ENCODE measurements at regions of chr11 and their contacts with region 1.

Region 1: DNA sequence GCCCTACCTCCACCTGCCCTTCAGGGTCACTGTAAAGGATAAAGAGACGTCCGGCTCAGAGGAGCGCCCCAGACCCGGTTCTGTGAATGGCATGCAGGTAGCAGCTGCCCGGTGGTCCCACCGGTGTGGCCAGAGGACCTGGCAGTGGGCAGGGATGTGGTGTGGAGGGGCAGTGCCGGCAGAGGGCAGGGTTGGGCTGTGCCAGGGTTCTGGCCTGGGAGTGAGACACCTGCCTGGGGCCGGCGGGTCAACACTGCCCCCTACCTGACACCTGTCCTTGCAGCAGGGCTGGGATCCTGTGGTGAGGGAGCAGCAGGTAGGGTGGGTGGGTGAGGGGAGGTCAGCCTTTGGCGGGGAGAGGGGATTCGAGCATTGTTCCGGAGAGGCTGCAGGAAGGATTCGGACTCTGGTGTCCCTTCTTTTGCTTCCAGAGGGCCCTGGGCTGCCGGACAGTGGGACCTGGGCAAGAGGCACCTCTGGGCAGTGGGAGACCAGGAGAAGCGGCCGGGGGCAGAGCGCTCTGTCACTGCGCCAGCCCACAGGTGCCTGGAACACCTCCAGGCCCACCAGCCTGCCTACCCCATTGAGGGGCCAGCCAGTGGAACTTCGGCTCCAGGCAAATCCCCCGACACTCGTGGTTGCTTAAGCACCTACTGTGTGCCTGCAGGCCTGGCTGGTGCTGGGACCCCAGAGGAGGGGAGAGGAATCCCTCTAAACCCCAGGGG is 1.6 kb upstream of the PHLDA2 start:
- DNase-seq: peak; percentile 99
- H3K4me3 Mint-ChIP-seq: peak overlapping the region; percentile 94
- H3K27ac Mint-ChIP-seq: peak overlapping the region; percentile 98
- H3K4me1 Mint-ChIP-seq: peaks cover 21% of the 10 kb centered on the region
- H3K27me3 Mint-ChIP-seq: no peaks in the 10 kb centered on the region
- CTCF ChIP-seq: peak; percentile 93

Region 2: DNA sequence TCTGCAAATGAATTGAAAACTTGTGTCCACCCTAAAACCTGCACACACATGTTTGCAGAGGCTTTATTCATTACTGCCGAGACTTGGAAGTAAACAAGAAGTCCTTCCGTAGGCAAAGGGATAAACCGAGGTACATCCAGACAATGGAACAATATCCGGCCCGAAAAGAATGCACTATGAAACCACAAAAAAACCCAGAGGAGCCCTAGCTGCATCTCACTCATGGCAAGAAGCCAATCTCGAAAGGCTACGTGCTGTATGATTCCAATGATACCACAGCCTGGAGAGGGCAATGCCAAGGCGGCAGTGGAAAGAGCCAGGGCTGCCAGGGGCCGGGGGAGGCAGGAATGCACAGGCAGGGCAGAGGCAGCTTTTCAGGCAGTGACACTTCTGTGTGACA is 986.9 kb before region 1 on chr11:
- CTCF ChIA-PET with region 1: no interaction called
- intact Hi-C with region 1: no loop called
- DNase-seq: no peak
- H3K4me3 Mint-ChIP-seq: no peak overlapping the region
- H3K27ac Mint-ChIP-seq: no peak overlapping the region
- H3K4me1 Mint-ChIP-seq: peaks cover 9% of the 10 kb centered on the region
- H3K27me3 Mint-ChIP-seq: peaks cover 17% of the 10 kb centered on the region
- CTCF ChIP-seq: no peak

Region 3: GRCh38 chr11:2532704-2533586 is 397.9 kb before region 1 on chr11:
- CTCF ChIA-PET with region 1: interaction called, 16 read pairs
- intact Hi-C with region 1: loop called (anchors 2 kb)
- DNase-seq: peak; percentile 96
- H3K4me3 Mint-ChIP-seq: peak overlapping the region; percentile 39
- H3K27ac Mint-ChIP-seq: peak overlapping the region; percentile 26
- H3K4me1 Mint-ChIP-seq: peaks cover 15% of the 10 kb centered on the region
- H3K27me3 Mint-ChIP-seq: no peaks in the 10 kb centered on the region
- CTCF ChIP-seq: peak; percentile 98

Region 4: DNA sequence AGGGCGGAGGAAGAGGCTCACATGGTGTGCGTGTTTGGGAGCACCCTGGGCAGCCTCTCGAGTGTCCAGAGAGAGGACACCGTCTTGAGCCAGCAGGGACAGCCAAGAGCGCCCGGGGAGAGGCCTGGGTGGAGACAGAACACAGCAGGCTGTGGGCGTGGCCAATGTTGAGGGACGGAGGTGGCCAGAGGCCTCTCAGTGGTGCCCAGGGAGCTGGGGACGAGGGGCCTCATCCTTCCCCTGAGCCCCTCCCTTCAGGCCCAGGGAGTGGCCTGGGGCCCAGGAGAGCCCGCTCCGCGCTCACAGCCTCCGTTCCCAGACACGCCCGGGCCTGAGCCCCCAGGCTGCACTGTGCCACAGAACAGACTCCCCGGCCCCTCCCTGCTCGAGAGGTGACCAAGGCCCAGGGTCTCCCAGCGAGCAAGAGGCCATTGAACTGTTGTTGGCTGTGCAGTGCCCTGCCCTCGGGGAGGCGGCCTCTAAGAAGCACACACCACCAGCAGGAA is 93.7 kb before region 1 on chr11:
- CTCF ChIA-PET with region 1: no interaction called
- intact Hi-C with region 1: no loop called
- DNase-seq: peak; percentile 76
- H3K4me3 Mint-ChIP-seq: no peak overlapping the region
- H3K27ac Mint-ChIP-seq: no peak overlapping the region
- H3K4me1 Mint-ChIP-seq: no peaks in the 10 kb centered on the region
- H3K27me3 Mint-ChIP-seq: peaks cover 67% of the 10 kb centered on the region
- CTCF ChIP-seq: peak; percentile 22

Region 5: DNA sequence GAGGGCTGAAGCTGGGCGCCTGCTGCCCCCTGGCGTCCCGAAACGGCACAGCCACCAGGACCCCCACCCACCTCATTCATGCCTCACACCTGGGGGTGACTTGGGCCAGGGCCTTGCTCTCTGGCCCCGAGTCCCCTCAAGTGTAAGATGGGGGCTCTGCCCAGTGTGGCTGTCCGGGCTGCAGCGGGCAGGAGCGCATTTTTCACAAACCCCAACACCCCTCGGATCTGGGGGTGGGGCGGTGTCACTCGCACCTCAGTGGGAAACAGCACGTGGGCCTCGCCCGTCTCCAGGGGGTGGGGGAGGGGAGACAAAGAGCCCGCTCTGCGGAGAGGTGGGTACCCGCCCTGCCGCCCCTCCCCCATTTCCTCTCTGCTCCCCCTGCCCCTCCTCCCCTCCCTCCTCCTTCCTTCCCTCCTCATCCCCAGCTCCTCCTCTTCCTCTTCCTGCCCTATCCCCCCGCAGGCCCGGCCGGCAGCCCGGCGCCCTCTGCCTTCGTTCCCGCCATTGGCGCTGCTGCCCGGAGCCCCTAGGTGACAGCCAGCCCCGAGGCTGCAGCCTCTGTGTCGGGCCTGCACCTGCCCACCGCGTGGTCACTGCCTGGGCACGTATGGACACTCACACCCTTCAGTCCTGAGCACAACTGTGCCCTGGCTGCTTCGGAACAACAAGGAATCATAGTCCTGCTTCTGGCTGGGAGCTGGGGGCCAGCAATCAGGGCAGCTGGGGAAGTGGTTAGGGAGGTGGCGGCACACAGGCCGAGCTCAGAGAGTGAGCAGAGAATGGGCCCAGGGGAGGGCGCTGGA is 38.4 kb before region 1 on chr11:
- CTCF ChIA-PET with region 1: interaction called, 40 read pairs
- intact Hi-C with region 1: loop called (anchors 2 kb)
- DNase-seq: peak; percentile 73
- H3K4me3 Mint-ChIP-seq: peak overlapping the region; percentile 72
- H3K27ac Mint-ChIP-seq: peak overlapping the region; percentile 84
- H3K4me1 Mint-ChIP-seq: peaks cover 15% of the 10 kb centered on the region
- H3K27me3 Mint-ChIP-seq: no peaks in the 10 kb centered on the region
- CTCF ChIP-seq: peak; percentile 86

Region 6: DNA sequence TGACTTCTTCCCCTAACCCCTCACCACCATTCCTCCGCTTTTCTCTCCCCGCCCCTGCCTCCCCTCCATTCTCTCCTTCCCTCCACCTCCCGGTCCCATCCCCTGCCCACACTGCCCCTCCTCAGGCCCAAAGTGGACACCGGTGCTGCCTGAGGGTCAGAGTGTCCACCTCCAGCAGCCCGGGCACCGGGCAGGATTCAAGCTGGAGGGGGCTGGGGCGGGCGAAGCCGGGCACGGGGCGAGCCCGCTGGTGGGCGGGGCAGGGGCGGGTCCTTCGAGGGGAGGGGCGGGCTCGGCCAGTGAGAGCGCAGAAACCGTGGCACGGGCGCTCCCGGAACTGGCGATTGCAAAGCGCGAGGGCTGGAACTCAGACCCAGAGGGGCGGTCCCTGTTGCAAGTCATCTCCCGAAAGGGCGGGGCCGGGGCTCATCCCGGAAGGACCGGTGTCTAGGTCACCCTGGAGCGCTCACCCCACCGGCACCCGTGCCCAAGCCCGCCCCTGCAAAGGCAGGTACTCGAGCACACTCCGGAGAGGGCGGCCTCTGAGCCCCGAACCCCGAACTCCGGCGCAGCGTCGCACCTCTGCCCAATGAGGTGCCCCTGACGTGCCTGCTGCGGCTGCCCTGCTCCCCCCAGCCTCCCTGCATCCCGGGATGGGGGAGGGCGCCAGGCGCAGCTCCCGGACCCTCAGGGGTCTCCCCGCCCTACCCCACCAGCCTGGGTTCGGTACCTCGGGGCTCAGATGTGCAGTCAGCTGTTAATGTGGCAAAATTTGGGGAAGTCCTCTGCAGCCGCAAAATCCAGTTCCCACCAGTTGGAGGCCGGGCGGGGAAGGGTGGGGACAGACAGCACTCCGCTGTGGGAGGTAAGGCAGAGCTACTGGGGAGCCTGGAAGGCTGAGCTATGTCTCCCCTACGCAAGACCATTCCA is 28.7 kb before region 1 on chr11:
- CTCF ChIA-PET with region 1: interaction called, 24 read pairs
- intact Hi-C with region 1: loop called (anchors 2 kb)
- DNase-seq: peak; percentile 95
- H3K4me3 Mint-ChIP-seq: peak overlapping the region; percentile 76
- H3K27ac Mint-ChIP-seq: no peak overlapping the region
- H3K4me1 Mint-ChIP-seq: peaks cover 66% of the 10 kb centered on the region
- H3K27me3 Mint-ChIP-seq: no peaks in the 10 kb centered on the region
- CTCF ChIP-seq: no peak

Region 7: DNA sequence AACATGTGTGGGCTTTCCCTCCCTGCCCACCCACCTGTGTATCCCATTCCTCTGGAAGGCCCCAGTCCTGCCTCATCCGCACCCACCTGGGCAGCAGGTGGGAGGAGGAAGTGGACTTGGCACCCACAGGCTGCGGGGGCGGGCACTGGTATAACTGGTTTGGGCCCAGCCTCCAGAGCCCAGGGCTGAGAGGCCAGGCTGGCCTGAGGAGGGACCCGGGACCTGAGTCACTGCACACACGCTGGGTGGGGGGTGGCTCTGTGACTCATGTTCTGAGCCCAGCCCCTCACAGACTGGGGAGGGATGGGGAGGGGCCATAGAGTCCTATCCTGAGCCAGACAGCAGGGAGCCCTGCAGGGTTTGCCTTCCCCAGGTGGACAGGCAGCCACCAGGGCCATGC is 18.4 kb before region 1 on chr11:
- CTCF ChIA-PET with region 1: interaction called, 12 read pairs
- intact Hi-C with region 1: loop called (anchors 2 kb)
- DNase-seq: peak; percentile 98
- H3K4me3 Mint-ChIP-seq: peak overlapping the region; percentile 56
- H3K27ac Mint-ChIP-seq: peak overlapping the region; percentile 81
- H3K4me1 Mint-ChIP-seq: peaks cover 44% of the 10 kb centered on the region
- H3K27me3 Mint-ChIP-seq: no peaks in the 10 kb centered on the region
- CTCF ChIP-seq: no peak

Region 8: GRCh38 chr11:3021125-3021524 is 90.3 kb after region 1 on chr11:
- CTCF ChIA-PET with region 1: interaction called, 3 read pairs
- intact Hi-C with region 1: loop called (anchors 2 kb)
- DNase-seq: peak; percentile 66
- H3K4me3 Mint-ChIP-seq: no peak overlapping the region
- H3K27ac Mint-ChIP-seq: no peak overlapping the region
- H3K4me1 Mint-ChIP-seq: peaks cover 28% of the 10 kb centered on the region
- H3K27me3 Mint-ChIP-seq: no peaks in the 10 kb centered on the region
- CTCF ChIP-seq: peak; percentile 84

Region 9: GRCh38 chr11:3091791-3092602 is 161.1 kb after region 1 on chr11:
- CTCF ChIA-PET with region 1: interaction called, 11 read pairs
- intact Hi-C with region 1: no loop called
- DNase-seq: peak; percentile 87
- H3K4me3 Mint-ChIP-seq: no peak overlapping the region
- H3K27ac Mint-ChIP-seq: no peak overlapping the region
- H3K4me1 Mint-ChIP-seq: peaks cover 30% of the 10 kb centered on the region
- H3K27me3 Mint-ChIP-seq: peaks cover 15% of the 10 kb centered on the region
- CTCF ChIP-seq: peak; percentile 97

Measured in Calu3 (cell line).